A673 (cell line): ENCODE measurements at regions of chr20 and their contacts with region 1.

Region 1: DNA sequence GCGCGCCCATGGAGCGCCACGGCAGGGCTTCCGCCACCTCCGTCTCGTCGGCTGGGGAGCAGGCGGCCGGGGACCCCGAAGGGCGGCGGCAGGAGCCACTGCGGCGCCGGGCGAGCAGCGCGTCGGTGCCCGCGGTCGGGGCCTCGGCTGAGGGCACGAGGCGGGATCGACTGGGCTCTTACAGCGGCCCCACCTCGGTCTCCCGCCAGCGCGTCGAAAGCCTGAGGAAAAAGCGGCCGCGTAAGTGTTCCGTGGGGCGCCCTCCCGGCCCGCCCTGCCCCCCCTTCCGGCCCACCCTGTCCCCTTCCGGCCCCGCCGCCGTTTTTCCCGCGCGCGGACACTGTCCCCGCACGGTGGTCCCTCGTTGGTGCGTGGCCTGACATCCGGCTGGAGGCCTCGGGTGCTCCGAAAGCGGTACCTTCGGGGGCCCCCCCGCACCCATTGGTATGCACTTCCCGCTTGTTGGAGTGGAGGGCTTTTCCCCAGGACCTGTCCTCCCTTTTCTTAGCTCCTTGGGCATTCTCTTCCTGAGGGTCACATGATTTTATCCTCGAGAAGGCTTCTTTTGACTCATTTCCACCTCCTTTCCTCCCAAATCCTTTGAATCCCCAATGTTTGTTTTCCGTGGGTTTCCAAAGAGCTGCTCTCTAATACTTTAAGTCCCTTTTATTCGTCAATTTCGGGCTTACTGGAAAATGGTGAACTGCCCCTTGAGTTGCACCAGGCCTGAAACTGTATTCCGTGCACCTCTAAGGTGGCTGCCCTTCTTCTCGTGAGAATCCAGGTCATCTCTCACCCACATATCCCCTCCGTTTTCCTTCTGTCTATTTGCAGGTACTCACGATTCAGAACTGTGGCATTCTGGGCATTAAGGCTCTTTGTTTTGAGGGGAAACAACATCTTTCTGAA is 556 bp downstream of the PANK2 start:
- DNase-seq: peak; percentile 46
- H3K4me3 ChIP-seq: peak overlapping the region; percentile 73
- H3K27ac ChIP-seq: peak overlapping the region; percentile 83
- H3K4me1 ChIP-seq: peaks cover 25% of the 10 kb centered on the region
- H3K27me3 ChIP-seq: no peaks in the 10 kb centered on the region
- CTCF ChIP-seq: no peak

Region 2: GRCh38 chr20:4089756-4090487 is 200.2 kb after region 1 on chr20:
- CTCF ChIA-PET with region 1: interaction called, 3 read pairs
- POLR2A ChIA-PET with region 1: no interaction called
- intact Hi-C with region 1: loop called (anchors 5 kb)
- DNase-seq: no peak
- H3K4me3 ChIP-seq: no peak overlapping the region
- H3K27ac ChIP-seq: no peak overlapping the region
- H3K4me1 ChIP-seq: peaks cover 7% of the 10 kb centered on the region
- H3K27me3 ChIP-seq: no peaks in the 10 kb centered on the region
- CTCF ChIP-seq: no peak